Stomach (tissue), 19 donors: ENCODE measurements at regions of chr20 and their contacts with region 1.

Region 1: DNA sequence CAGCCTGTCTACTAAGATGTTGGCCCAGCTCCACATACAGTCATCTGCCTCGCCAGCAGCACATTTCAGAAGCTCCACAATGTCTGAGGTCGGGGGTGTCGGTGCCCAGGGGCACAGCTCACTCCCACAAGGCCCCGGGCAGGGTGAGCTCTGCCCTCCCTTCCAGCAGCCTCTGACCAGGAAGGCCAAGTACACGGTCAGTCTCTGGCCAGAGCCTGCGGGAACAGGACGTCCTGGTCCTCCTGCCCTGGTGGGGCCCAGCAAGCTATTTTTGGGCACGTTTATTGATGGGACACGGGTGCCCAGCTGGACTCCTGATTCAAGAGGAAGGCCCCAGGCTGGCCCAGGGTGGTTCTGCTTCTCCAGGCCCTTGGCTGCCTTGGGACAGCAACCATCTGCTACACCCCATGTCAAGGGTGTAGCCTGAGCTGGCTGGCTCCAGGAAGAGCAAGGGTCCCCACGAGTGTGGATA is 114.9 kb upstream of the PTPN1 start:
- DNase-seq: peak in 1 of 2 donors; percentile 89
- H3K4me3 ChIP-seq: no peak overlapping the region
- H3K27ac ChIP-seq: peak overlapping the region; percentile 64 to 88 (median 79)
- H3K4me1 ChIP-seq: peaks cover 47 to 73% (median 62%) of the 10 kb centered on the region in 4 donors
- H3K27me3 ChIP-seq: no peaks in the 10 kb centered on the region
- CTCF ChIP-seq: no peak
- EP300 ChIP-seq: peak; percentile 100
- POLR2A ChIP-seq: no peak

Region 2: GRCh38 chr20:50320910-50321796 is 74.1 kb before region 1 on chr20:
- intact Hi-C with region 1: no loop called
- DNase-seq: peak; percentile 89 to 93
- H3K4me3 ChIP-seq: peak overlapping the region; percentile 11 to 37 (median 28)
- H3K27ac ChIP-seq: peak overlapping the region; percentile 39 to 88 (median 85)
- H3K4me1 ChIP-seq: peaks cover 19 to 30% (median 22%) of the 10 kb centered on the region in 4 donors
- H3K27me3 ChIP-seq: no peaks in the 10 kb centered on the region
- CTCF ChIP-seq: peak in 1 of 7 experiments; percentile 5
- EP300 ChIP-seq: no peak
- POLR2A ChIP-seq: no peak

Region 3: DNA sequence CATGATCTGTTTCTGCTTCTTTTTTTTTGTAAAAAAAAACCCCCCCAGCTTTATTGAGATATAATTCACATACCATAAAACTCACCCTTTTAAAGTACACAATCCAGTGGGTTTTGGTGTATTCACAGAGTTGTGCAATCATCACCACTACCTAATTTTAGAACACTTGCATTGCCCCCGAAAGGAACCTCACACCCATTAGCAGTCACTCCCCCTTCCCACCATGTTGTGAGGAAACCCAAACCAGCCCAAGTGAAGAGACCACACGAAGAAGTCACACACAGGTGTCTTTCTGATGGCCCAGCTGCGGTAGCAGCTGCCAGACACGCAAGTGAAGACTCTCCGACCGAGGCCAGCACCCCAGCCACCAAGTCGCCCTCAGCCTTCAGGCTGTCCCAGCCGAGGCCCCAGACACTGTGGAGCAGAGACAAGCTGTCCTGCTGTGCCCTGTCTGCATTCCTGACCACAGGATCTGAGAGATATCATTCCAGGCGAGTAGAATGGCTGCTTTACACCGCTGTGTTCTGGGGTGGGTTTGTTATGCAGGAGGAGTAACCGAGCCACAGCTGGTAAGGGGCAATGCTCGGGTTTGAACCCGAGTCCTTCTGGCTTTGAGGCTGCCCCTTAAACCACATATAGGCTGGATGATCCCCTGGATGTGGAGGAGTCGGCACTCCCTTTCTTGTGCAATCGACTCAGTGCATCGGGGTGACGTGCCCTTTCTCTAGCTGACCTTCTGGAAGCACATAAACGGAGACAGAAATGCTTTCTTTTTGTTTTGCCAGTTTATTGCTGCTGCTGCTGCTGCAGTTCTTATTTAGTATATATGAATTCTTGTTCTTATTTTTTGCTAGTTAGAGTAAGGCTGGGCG is 55.8 kb after region 1 on chr20:
- intact Hi-C with region 1: loop called (anchors 10 kb)
- DNase-seq: peak; percentile 48 to 56
- H3K4me3 ChIP-seq: no peak overlapping the region
- H3K27ac ChIP-seq: peak overlapping the region; percentile 2 to 69 (median 51)
- H3K4me1 ChIP-seq: peaks cover 30 to 49% (median 34%) of the 10 kb centered on the region in 4 donors
- H3K27me3 ChIP-seq: no peaks in the 10 kb centered on the region
- CTCF ChIP-seq: no peak
- EP300 ChIP-seq: no peak
- POLR2A ChIP-seq: no peak

Region 4: DNA sequence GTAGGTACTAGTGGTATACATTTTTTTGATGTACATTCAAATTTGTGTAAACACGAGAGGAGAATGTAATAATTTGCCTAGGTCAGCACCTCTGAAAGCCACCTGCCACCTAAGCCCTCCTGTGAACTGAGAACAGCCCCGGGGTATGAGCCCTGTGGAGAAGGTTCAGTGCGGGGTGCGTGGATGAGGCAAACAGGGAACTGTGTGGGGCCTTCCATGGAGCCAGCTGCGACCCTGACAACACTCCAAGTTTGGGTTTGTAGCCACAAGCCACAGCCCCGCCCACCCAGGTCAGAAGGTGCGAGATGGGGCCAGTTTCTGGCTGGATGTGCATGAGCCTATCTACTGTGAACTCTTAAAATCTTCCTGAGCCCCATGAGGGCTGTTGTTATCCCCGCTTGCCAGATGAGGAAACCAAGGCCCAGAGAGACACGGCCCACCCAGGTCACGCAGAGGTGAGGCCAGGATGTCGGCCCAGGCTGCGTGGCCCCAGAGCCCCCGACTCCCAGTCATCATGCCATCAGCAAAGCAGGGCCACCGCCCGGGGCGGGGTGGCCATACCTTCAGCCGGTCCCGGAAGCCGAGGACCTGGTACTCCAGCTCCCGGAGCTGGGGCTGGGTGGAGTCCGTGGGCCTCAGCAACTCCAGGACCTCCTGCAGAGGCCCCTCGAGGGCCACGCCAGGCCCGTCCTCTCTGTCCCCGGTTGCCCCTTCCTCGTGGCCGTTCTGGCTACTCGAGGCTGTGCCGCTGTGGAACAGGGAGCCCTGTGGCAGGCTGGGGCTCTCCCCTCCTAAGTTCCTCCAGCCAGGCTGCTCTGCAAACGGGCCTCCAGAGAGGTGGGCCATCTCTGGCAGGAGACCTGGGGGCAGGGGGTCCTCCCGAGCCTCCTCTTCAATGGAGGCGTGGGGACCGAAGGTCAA is 206.5 kb after region 1 on chr20:
- intact Hi-C with region 1: no loop called
- DNase-seq: peak in 1 of 2 donors; percentile 49
- H3K4me3 ChIP-seq: no peak overlapping the region
- H3K27ac ChIP-seq: no peak overlapping the region
- H3K4me1 ChIP-seq: peaks cover 0 to 11% (median under 1%) of the 10 kb centered on the region in 4 donors
- H3K27me3 ChIP-seq: peaks cover 0 to 23% (median 0%) of the 10 kb centered on the region in 3 donors
- CTCF ChIP-seq: no peak
- EP300 ChIP-seq: no peak
- POLR2A ChIP-seq: no peak